ENCODE measurements at regions of chr6 and their contacts with region 1.

Region 1: DNA sequence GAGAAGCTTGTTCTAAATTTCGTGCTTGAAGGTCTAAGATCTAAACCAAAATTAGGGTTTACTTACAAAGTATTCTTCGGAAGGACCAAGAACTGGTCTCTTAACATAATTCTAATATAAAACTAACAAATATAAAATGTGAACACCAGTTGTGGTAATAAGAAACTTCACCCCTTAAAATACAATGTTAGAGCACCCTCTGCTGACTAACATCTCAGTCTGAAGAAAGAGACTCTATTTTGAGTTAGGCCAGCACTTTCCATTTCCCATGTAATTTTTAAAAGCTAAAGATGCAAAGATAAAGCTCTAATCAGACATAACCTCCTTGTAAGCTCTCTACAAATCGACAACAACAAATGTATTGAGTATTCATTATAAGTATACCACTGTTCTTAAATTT is 24.6 kb downstream of the ATG5 start:
- DNase-seq: no peak
- H3K4me3 Mint-ChIP-seq: no peak overlapping the region
- H3K27ac Mint-ChIP-seq: no peak overlapping the region
- H3K4me1 Mint-ChIP-seq: peaks cover 14% of the 10 kb centered on the region
- H3K27me3 Mint-ChIP-seq: no peaks in the 10 kb centered on the region

Region 2: DNA sequence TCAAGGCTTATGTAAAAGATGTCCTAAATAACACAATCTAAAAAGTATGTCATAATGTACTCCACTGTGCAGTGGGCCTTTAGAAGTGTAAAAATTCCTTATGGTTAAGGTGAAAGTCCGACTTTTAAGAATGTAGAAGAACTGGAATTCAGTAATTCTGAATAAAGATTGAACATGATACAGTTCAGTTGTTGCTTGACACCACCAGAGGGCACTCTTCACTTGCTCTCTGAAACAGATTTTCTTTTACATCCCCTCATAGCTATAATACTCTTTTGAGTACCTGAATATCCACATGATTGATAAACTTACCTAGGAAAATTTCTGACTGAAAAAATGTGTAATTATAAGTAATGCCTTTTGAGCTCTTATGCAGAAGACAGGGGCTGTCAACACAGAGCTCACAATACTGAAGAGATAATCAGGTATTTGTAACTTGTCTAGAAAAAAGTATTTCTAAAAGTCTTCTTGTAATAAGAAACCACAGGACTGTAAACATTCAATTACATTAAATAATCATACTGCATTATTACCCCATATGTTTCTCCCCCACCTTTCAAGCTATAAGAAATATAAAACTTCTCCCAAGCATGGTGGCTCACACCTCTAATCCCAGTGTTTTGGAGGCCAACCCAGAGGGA is 1213.3 kb before region 1 on chr6:
- intact Hi-C with region 1: loop called (anchors 5 kb)
- DNase-seq: no peak
- H3K4me3 Mint-ChIP-seq: no peak overlapping the region
- H3K27ac Mint-ChIP-seq: no peak overlapping the region
- H3K4me1 Mint-ChIP-seq: no peaks in the 10 kb centered on the region
- H3K27me3 Mint-ChIP-seq: peaks cover 10% of the 10 kb centered on the region

Region 3: DNA sequence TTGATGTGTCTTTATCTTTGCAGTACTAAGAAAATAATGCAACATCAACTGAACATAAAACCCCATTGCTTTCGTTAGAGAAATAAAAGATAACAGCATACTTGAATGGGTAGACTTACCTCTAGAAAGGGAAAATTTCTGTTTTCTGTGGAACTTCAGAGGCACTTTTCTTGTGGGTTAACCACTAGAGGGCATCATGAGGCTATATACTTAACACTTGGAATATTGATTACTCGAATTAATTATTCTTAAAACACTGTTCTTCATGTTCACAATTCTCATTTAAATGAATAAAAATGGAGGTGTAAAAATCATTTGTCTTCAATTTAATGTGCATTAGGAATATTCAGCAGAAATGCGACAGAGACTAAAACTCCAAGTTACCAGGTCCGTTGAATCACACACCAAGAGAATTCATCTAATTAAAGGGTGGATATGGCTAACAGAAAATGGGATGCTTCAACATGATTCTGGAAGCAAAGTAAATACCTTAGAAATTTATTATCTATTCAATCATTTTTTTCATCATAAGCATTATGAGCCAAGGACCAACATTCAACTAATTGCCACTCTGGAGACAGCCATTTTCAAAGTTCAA is 567.3 kb before region 1 on chr6:
- intact Hi-C with region 1: loop called (anchors 5 kb)
- DNase-seq: no peak
- H3K4me3 Mint-ChIP-seq: no peak overlapping the region
- H3K27ac Mint-ChIP-seq: no peak overlapping the region
- H3K4me1 Mint-ChIP-seq: peaks cover 44% of the 10 kb centered on the region
- H3K27me3 Mint-ChIP-seq: peaks cover 3% of the 10 kb centered on the region

Region 4: DNA sequence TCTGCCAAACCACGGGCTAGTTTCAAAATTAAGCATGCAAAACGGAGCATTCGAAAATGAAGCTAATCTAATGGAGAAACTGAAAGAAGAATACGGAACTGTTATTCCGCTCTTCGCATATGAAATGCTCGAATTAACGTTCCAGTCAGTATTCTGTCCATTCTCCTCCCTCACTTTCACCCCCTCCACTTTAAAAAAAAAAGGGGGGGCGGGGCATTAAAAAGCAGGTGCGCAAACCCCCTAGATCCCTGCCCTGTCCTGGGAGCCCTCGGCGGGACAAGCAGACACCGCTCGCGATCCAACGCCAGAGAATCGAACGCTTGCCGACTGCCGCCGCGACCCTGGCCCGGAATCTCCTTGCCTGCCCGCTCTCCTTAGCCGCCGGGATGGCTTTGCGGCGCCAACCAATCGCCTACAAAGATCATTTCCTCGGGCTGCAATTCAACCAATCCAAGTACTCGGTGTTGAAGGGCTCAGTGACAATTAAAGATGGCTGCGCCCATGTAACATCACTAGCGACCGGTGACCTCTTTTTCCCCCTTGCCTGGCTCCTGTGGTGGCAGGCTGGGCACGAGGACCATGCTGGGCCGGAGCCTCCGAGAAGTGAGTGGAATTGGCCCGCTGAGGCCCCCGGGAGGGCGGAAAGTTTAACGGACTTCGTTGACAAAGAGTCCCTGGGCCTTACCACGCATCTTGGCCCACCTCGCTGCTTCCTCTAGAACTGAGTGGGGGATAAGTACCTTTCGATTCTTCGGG is 328.3 kb after region 1 on chr6 and contains the starts of genes QRSL1 and RTN4IP1:
- intact Hi-C with region 1: no loop called
- DNase-seq: peak; percentile 84
- H3K4me3 Mint-ChIP-seq: peak within 1 kb of the TSS; percentile 95
- H3K27ac Mint-ChIP-seq: peak within 1 kb of the TSS; percentile 98
- H3K4me1 Mint-ChIP-seq: peaks cover 33% of the 10 kb centered on the region
- H3K27me3 Mint-ChIP-seq: no peaks in the 10 kb centered on the region
- total RNA-seq, gene QRSL1: 18.6 and 21.9 TPM in 2 replicates
- total RNA-seq, gene RTN4IP1: 6.4 and 6.8 TPM in 2 replicates

Measured in activated T-helper 1 cell treated with anti-CD3 and anti-CD28 coated beads, Interleukin-12 subunit alpha, Interleukin-12 subunit beta, Interleukin-2, Interleukin-4 antibody, amounts not matched to agents 30 ng/mL and 10 ng/mL and 1 ng/mL, durations not matched to agents 14 hours and 24 hours and 36 hours (primary cell).